ENCODE measurements at regions of chr11 and their contacts with region 1.

Region 1: GRCh38 chr11:58165504-58166106 is 23.3 kb upstream of the OR9Q2 start:
- DNase-seq: peak; percentile 23
- H3K4me3 ChIP-seq: no peak overlapping the region
- H3K27ac ChIP-seq: peak overlapping the region in 2 of 4 donors; percentile 25 to 43
- H3K4me1 ChIP-seq: peaks cover 0 to 27% (median 6%) of the 10 kb centered on the region in 4 donors
- H3K27me3 ChIP-seq: no peaks in the 10 kb centered on the region
- CTCF ChIP-seq: no peak
- EP300 ChIP-seq: no peak
- POLR2A ChIP-seq: no peak

Region 2: GRCh38 chr11:58192229-58192628 is 26.6 kb after region 1 on chr11:
- in situ Hi-C with region 1: no loop called
- intact Hi-C with region 1: no loop called
- DNase-seq: peak; percentile 67
- H3K4me3 ChIP-seq: no peak overlapping the region
- H3K27ac ChIP-seq: peak overlapping the region; percentile 75 to 87 (median 82)
- H3K4me1 ChIP-seq: peaks cover 0 to 21% (median 11%) of the 10 kb centered on the region in 4 donors
- H3K27me3 ChIP-seq: no peaks in the 10 kb centered on the region
- CTCF ChIP-seq: peak in 2 of 5 experiments; percentile 28 to 29
- EP300 ChIP-seq: peak; percentile 56
- POLR2A ChIP-seq: no peak

Region 3: DNA sequence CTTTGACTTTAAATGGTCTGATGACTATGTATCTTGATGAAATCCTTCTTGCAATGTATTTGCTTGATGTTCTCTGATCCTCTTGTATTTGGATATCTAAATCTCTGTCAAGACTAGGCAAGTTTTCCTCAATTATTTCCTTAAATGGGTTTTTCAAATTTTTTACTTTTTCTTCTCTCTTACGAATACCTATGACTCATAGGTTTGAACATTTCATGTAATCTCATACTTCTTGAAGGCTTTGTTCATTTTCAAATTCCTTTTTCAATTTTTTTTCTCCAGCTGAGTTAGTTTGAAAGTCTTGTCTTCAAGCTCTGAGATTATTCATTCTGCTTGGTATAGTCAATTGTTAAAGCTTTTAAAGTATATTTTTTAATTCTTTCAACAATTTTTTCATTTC is 89.3 kb after region 1 on chr11:
- in situ Hi-C with region 1: loop called in 1 of 4 experiments (anchors 25 kb)
- intact Hi-C with region 1: no loop called
- DNase-seq: no peak
- H3K4me3 ChIP-seq: no peak overlapping the region
- H3K27ac ChIP-seq: no peak overlapping the region
- H3K4me1 ChIP-seq: no peaks in the 10 kb centered on the region
- H3K27me3 ChIP-seq: no peaks in the 10 kb centered on the region
- CTCF ChIP-seq: no peak
- EP300 ChIP-seq: no peak
- POLR2A ChIP-seq: no peak